Dendritic cell treated with granulocyte-macrophage colony-stimulating factor and Interleukin-4, amounts not matched to agents 40 ng/mL and 50 ng/mL, for 4 days (primary cell): ENCODE measurements at regions of chr9 and their contacts with region 1.

Region 1: DNA sequence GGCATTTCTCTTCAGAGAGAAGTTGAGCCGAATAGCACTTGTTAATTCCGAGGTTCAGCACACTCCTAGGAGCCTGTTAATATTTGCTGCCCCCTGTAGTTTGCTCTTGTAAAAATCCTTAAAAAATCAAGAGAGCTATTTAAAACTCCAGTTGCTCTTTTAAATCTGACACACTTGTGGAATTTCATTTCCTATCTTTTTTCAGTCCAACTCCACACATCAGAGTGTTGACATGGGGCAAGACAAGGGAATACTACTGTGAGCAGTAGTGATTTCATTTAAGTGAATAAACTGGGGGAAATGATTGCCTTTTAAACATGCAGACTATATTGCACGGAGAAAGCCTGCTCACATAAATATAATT is 1096.3 kb upstream of the DMAC1 start:
- H3K4me3 Mint-ChIP-seq: no peak overlapping the region
- H3K27ac Mint-ChIP-seq: no peak overlapping the region
- H3K4me1 Mint-ChIP-seq: no peaks in the 10 kb centered on the region
- H3K27me3 Mint-ChIP-seq: peaks cover 3% of the 10 kb centered on the region

Region 2: GRCh38 chr9:7570107-7570720 is 1325.6 kb before region 1 on chr9:
- intact Hi-C with region 1: loop called (anchors 1 kb)
- H3K4me3 Mint-ChIP-seq: no peak overlapping the region
- H3K27ac Mint-ChIP-seq: no peak overlapping the region
- H3K4me1 Mint-ChIP-seq: no peaks in the 10 kb centered on the region
- H3K27me3 Mint-ChIP-seq: no peaks in the 10 kb centered on the region

Region 3: GRCh38 chr9:7844242-7844641 is 1051.6 kb before region 1 on chr9:
- intact Hi-C with region 1: loop called (anchors 10 kb)
- H3K4me3 Mint-ChIP-seq: no peak overlapping the region
- H3K27ac Mint-ChIP-seq: no peak overlapping the region
- H3K4me1 Mint-ChIP-seq: no peaks in the 10 kb centered on the region
- H3K27me3 Mint-ChIP-seq: no peaks in the 10 kb centered on the region

Region 4: GRCh38 chr9:8419596-8420275 is 476.1 kb before region 1 on chr9:
- intact Hi-C with region 1: no loop called
- H3K4me3 Mint-ChIP-seq: no peak overlapping the region
- H3K27ac Mint-ChIP-seq: no peak overlapping the region
- H3K4me1 Mint-ChIP-seq: no peaks in the 10 kb centered on the region
- H3K27me3 Mint-ChIP-seq: no peaks in the 10 kb centered on the region

Region 5: DNA sequence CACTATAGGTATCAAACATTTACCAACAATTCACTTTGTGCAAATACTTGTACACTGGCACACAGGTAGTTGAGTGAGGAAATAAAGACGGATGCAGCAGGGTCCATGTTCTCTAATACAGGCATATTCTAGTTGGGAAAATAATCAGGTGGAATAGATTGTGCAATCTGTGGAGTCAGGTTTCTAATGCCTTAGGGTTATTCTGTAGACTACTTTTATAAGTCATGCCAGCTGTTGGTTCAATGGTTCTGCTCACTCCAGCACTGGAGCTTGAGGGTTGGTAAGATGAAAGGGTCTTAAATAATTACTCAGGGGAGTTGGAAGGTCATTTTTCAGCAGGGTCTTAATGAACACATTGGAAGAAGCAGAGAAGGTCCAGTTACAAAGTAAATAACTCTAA is 406.0 kb before region 1 on chr9:
- intact Hi-C with region 1: loop called (anchors 10 kb)
- H3K4me3 Mint-ChIP-seq: no peak overlapping the region
- H3K27ac Mint-ChIP-seq: no peak overlapping the region
- H3K4me1 Mint-ChIP-seq: no peaks in the 10 kb centered on the region
- H3K27me3 Mint-ChIP-seq: no peaks in the 10 kb centered on the region

Region 6: GRCh38 chr9:8857926-8858595 is 37.8 kb before region 1 on chr9:
- intact Hi-C with region 1: no loop called
- H3K4me3 Mint-ChIP-seq: peak overlapping the region; percentile 61
- H3K27ac Mint-ChIP-seq: no peak overlapping the region
- H3K4me1 Mint-ChIP-seq: peaks cover 17% of the 10 kb centered on the region
- H3K27me3 Mint-ChIP-seq: peaks cover 52% of the 10 kb centered on the region